ENCODE measurements at regions of chr3 and their contacts with region 1.

Region 1: GRCh38 chr3:161388855-161389254 is 17.5 kb upstream of the SPTSSB start:
- DNase-seq: no peak
- ATAC-seq: no peak
- H3K4me3 ChIP-seq: no peak overlapping the region
- H3K4me3 Mint-ChIP-seq: no peak overlapping the region
- H3K27ac ChIP-seq: no peak overlapping the region
- H3K27ac Mint-ChIP-seq: no peak overlapping the region
- H3K4me1 ChIP-seq: peaks cover 10% of the 10 kb centered on the region
- H3K4me1 Mint-ChIP-seq: peaks cover 21% of the 10 kb centered on the region
- H3K27me3 ChIP-seq: peaks cover 3 to 7% of the 10 kb centered on the region in 2 experiments
- H3K27me3 Mint-ChIP-seq: peaks cover 35% of the 10 kb centered on the region
- CTCF ChIP-seq: no peak

Region 2: GRCh38 chr3:160376681-160377080 is 1012.2 kb before region 1 on chr3:
- CTCF ChIA-PET with region 1: no interaction called
- POLR2A ChIA-PET with region 1: no interaction called
- intact Hi-C with region 1: loop called in 1 of 2 experiments (anchors 5 kb)
- DNase-seq: no peak
- ATAC-seq: no peak
- H3K4me3 ChIP-seq: no peak overlapping the region
- H3K4me3 Mint-ChIP-seq: no peak overlapping the region
- H3K27ac ChIP-seq: no peak overlapping the region
- H3K27ac Mint-ChIP-seq: no peak overlapping the region
- H3K4me1 ChIP-seq: no peaks in the 10 kb centered on the region
- H3K4me1 Mint-ChIP-seq: no peaks in the 10 kb centered on the region
- H3K27me3 ChIP-seq: no peaks in the 10 kb centered on the region
- H3K27me3 Mint-ChIP-seq: no peaks in the 10 kb centered on the region
- CTCF ChIP-seq: no peak

Region 3: GRCh38 chr3:161371430-161372326 is 17.2 kb before region 1 on chr3 and contains the start of gene SPTSSB:
- CTCF ChIA-PET with region 1: interaction called, 3 read pairs
- POLR2A ChIA-PET with region 1: no interaction called
- intact Hi-C with region 1: loop called in 1 of 2 experiments (anchors 2 kb)
- DNase-seq: peak; percentile 3 to 72 (median 56)
- ATAC-seq: peak; percentile 75
- H3K4me3 ChIP-seq: peak within 1 kb of the TSS; percentile 54 to 57
- H3K4me3 Mint-ChIP-seq: peak within 1 kb of the TSS; percentile 87
- H3K27ac ChIP-seq: no peak within 1 kb of the TSS
- H3K27ac Mint-ChIP-seq: no peak within 1 kb of the TSS
- H3K4me1 ChIP-seq: peaks cover 13% of the 10 kb centered on the region
- H3K4me1 Mint-ChIP-seq: peaks cover 16% of the 10 kb centered on the region
- H3K27me3 ChIP-seq: peaks cover 13 to 16% of the 10 kb centered on the region in 2 experiments
- H3K27me3 Mint-ChIP-seq: peaks cover 27% of the 10 kb centered on the region
- CTCF ChIP-seq: no peak
- total RNA-seq, gene SPTSSB: not detected

Measured in CD8-positive, alpha-beta T cell (primary cell).